PC-9 (cell line): ENCODE measurements at regions of chr7 and their contacts with region 1.

Region 1: DNA sequence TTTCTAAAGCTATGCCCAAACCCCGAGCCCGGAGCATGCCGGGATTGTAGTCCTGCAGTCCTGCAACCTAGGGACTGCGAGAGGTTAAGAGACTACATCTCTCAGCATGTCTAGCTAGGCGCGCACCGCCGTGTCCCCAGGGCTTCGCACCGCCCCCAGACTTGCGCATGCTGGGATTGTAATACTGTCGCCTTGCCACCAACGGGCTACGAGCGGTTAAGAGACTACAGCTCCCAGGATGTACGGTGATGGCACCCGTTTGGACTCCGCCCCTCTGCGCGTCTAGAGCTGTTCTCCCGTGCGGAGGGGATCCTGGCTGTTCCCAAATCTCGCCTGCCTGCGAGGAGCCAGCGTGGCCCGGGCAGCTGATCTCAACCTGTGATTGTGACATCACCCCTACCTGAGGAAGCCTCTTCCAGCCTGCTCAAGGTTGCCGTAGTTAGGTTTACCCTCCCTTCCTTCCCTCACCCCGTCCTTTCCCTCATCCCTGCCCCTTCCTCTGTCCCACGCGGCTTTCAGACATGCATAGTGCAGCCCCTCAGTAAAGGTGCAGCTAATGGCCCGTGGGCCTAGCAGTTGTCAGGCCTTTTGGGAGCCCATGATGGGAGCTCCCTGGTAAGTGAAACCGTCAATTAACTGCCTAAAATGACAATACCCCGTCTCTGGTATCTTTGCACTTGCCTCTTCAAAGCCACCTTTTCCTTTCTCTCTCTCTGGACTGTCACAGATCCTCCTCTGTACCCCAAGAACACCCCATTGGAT is 6.3 kb upstream of the ZNF736 start:
- DNase-seq: peak; percentile 90 to 94
- H3K4me3 ChIP-seq: peak overlapping the region; percentile 73
- H3K27ac ChIP-seq: 0 out of 2 replicates have a peak overlapping the region, but pooled peaks have one; percentile 20
- H3K4me1 ChIP-seq: 0 out of 2 replicates have a peak, but pooled peaks cover 5% of the 10 kb centered on the region
- H3K27me3 ChIP-seq: no peaks in the 10 kb centered on the region
- CTCF ChIP-seq: no peak

Region 2: DNA sequence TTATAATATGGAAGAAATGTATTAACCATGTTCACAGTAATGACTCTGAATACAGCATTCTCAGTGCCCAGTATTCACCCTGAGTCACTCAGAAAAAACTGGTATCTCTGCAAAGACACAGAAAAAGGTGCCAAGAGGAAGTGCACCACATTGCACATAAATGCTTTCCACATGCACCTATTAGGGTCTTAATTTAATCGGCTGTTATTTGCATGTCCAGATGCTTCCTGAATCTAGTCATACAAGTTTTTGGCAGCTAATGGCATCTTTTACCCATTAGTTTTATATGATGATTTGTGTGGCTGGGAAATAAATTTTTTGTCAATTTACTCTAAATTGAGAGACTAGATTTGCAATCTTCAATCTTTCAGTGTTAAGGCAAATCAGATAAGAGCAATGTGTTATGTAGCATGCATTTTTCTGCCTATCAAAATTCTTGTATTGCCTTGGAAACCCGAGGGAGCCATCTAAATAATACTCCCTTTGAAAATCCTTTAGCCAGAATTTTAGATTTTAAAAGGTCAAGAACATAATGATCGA is 197.2 kb after region 1 on chr7:
- CTCF ChIA-PET with region 1: no interaction called
- POLR2A ChIA-PET with region 1: interaction called, 10 read pairs
- intact Hi-C with region 1: no loop called
- DNase-seq: no peak
- H3K4me3 ChIP-seq: no peak overlapping the region
- H3K27ac ChIP-seq: no peak overlapping the region
- H3K4me1 ChIP-seq: no peaks in the 10 kb centered on the region
- H3K27me3 ChIP-seq: no peaks in the 10 kb centered on the region
- CTCF ChIP-seq: no peak

Region 3: DNA sequence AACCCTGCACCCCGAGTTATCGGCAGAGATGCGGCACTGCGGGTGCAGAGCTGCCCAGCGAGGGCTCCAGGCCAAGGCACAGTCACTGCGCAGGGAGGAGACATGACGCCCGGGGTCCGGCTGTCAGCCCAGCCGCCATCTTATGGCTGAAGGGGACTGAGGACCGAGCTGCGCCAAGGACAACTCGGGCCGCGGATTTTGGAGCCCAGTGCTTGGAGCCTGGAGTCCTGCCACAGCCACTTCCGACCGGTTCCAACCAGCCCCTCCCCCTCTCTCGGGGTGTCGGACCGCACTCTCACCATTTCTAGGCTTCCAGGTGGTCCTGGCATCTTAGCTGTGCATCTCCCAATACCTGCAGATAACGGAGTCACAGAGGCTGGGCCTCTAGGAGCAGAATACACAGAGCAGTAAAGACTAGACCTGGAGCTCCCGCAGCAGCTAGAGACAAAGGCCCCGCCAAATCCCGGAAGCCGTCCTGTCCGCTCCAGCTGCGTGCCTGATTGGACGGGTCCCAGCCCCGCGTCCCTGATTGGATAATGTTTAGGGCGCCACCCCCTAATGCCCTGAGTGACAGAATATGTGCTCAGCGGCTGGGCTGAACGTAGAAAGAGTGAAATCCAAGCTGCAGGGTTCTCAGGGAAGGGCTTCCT is 255.3 kb after region 1 on chr7 and contains the start of gene ZNF680:
- CTCF ChIA-PET with region 1: no interaction called
- POLR2A ChIA-PET with region 1: interaction called, 3 read pairs
- intact Hi-C with region 1: loop called (anchors 2 kb)
- DNase-seq: peak; percentile 89 to 94
- H3K4me3 ChIP-seq: peak within 1 kb of the TSS; percentile 83
- H3K27ac ChIP-seq: no peak within 1 kb of the TSS
- H3K4me1 ChIP-seq: 0 out of 2 replicates have a peak, but pooled peaks cover 5% of the 10 kb centered on the region
- H3K27me3 ChIP-seq: no peaks in the 10 kb centered on the region
- CTCF ChIP-seq: no peak
- total RNA-seq, gene ZNF680: 16.4 and 17.9 TPM in 2 replicates

Region 4: GRCh38 chr7:64665980-64666662 is 358.7 kb after region 1 on chr7 and contains the start of gene ZNF107:
- CTCF ChIA-PET with region 1: no interaction called
- POLR2A ChIA-PET with region 1: no interaction called
- intact Hi-C with region 1: no loop called
- DNase-seq: peak; percentile 88 to 90
- H3K4me3 ChIP-seq: peak within 1 kb of the TSS; percentile 69
- H3K27ac ChIP-seq: no peak within 1 kb of the TSS
- H3K4me1 ChIP-seq: peaks cover 9% of the 10 kb centered on the region
- H3K27me3 ChIP-seq: no peaks in the 10 kb centered on the region
- CTCF ChIP-seq: no peak
- total RNA-seq, gene ZNF107: 4.8 and 6.0 TPM in 2 replicates